AG04449 (cell line): ENCODE measurements at regions of chr17 and their contacts with region 1.

Region 1: GRCh38 chr17:21275579-21276263 is 8.8 kb upstream of the MAP2K3 start:
- DNase-seq: no peak
- H3K4me3 ChIP-seq: peak overlapping the region; percentile 65
- CTCF ChIP-seq: no peak

Region 2: GRCh38 chr17:21119247-21119918 is 156.3 kb before region 1 on chr17:
- CTCF ChIA-PET with region 1: interaction called, 15 read pairs
- POLR2A ChIA-PET with region 1: no interaction called
- DNase-seq: no peak
- H3K4me3 ChIP-seq: no peak overlapping the region
- CTCF ChIP-seq: peak; percentile 90

Region 3: DNA sequence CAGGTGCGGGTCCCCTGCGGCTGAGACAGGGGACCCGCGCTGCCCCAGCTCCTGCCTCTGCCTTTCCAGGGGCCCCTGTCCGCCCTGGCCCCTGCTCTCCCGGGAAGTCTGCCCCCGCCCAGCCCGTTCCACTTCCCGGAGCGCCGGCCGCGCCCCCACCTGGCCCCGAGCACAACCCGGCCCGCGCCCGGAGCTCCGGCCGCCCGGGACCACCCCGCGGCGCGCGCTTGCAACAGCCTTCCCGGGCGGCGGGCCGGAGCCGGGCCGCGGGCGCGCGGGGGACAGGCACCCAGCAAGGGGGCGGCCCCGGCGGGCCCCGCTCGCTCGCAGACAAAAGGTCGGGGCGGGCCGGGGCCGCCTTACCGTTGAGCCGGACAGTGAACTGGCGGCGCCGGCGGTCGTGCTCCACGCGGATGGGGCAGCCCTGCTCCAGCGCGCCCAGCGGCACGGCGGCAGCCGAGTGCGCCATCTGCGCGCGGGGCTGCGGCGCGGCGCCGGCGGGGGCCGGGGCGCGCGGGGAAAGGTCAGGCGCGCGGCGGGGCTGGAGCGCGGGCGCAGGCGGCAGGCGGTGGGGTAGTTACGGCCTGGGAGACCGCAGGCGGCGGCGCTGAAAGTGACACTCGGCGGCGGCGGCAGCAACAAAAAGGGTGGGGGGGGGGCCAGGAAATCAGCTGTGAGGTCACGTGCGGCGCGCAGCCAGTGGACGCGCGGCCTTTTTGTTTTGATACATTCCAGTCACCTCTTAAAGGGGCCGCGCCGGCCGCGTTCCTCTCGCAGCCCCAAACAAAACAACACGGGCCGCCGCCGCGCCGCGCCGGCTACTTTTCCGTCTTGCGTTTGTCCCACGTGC is 22.7 kb before region 1 on chr17 and contains the start of gene NATD1:
- CTCF ChIA-PET with region 1: interaction called, 10 read pairs
- POLR2A ChIA-PET with region 1: no interaction called
- DNase-seq: no peak
- H3K4me3 ChIP-seq: peak within 1 kb of the TSS; percentile 59
- CTCF ChIP-seq: no peak

Region 4: GRCh38 chr17:21263351-21263750 is 12.4 kb before region 1 on chr17:
- CTCF ChIA-PET with region 1: interaction called, 20 read pairs
- POLR2A ChIA-PET with region 1: no interaction called
- DNase-seq: no peak
- H3K4me3 ChIP-seq: no peak overlapping the region
- CTCF ChIP-seq: no peak

Region 5: DNA sequence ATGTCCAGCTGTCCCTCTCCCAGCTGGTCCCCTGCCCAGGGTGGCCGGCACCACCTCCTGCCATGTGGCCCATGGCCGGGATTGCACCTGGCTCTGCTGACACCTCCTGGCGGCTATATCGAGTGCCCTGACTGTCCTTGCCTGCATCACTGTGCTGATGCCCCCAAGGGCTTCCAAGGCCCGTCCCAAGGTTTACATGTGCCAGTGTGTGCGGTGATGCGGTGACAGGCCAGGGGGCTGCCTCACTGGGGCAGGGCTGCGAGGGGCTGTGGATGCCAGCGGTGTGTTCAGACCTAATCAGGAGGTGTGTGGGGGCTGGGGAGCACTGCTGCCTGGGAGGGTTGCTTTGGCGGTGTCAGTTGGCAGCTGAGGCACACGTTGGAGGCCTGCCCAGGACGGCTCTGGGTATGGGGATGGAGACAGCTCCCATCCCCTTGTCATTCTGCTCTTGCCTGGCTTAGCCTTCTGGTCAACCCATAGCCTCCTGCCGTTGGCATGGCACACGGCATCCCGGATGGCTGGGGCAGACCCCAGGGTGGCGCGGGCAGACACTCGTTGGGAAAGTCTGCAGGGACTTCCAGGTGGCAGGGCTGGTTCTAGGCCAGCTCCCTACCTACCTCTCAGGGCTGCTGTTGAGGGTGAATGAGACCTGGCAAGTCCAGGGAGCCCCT is 14.3 kb after region 1 on chr17:
- CTCF ChIA-PET with region 1: interaction called, 20 read pairs
- POLR2A ChIA-PET with region 1: interaction called, 5 read pairs
- DNase-seq: no peak
- H3K4me3 ChIP-seq: no peak overlapping the region
- CTCF ChIP-seq: no peak

Region 6: GRCh38 chr17:21345236-21345635 is 69.5 kb after region 1 on chr17:
- CTCF ChIA-PET with region 1: no interaction called
- POLR2A ChIA-PET with region 1: no interaction called
- DNase-seq: no peak
- H3K4me3 ChIP-seq: no peak overlapping the region
- CTCF ChIP-seq: no peak

Region 7: DNA sequence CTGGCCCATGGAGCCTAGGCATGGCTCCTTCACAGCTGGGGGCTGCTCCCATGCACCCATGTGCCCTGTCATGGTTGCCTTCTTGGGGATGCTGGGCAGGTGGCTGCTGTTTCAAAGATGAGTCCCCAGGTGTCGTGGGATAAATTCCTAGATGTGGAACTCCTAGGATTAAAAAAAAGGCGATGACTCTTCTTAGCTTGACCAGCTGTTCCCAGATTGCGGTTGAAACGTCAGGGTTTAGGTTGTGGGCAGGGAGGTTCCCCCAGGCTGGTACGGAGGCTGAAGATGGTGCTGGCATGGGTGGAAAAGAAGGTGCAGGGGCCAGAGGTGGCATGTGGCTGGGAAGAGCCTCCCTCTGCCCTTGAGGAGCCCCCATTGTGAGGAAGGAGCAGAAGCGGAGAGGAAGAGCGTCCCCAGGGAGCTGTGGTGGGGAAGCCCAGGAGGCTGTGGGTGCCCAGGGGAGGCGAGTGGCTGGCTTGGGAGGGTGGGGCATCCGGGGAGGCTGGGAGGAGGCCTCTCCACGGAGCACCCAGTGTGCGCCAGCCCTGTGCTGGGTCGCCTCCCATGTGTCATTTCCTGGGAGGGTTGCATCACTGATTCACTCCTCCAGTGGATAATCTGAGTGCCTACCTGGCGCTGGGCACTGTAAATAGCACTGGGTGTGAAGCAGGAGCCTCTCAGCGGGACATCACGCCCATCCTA is 93.0 kb after region 1 on chr17:
- CTCF ChIA-PET with region 1: no interaction called
- POLR2A ChIA-PET with region 1: no interaction called
- DNase-seq: no peak
- H3K4me3 ChIP-seq: no peak overlapping the region
- CTCF ChIP-seq: no peak

Region 8: GRCh38 chr17:21457051-21458026 is 181.6 kb after region 1 on chr17:
- CTCF ChIA-PET with region 1: interaction called, 10 read pairs
- POLR2A ChIA-PET with region 1: no interaction called
- DNase-seq: peak; percentile 17
- H3K4me3 ChIP-seq: no peak overlapping the region
- CTCF ChIP-seq: peak; percentile 98